Ascending aorta (tissue), 2 donors: ENCODE measurements at regions of chr17 and their contacts with region 1.

Region 1: DNA sequence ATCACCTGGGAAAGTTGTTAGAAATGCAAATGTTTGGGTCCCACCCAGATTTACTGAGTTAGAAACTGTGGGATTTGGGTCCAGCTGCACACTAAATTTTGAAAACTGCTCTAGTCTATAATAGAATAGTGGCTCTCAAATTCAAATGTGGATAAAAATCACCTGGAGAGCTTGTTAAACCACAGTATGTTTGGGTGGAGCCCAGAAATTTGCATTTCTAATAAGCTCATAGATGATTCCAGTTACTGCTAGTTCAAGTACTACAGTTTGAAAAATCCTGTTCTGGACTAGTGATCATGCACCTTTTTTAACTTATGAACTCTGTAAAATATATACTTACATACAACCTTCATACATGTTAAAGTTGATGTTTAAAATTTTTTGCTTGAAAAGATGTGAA is 27.8 kb downstream of the RABEP1 start:
- DNase-seq: no peak
- H3K4me3 ChIP-seq: no peak overlapping the region
- H3K27ac ChIP-seq: no peak overlapping the region
- H3K4me1 ChIP-seq: peaks cover 0 to 2% of the 10 kb centered on the region in 2 donors
- H3K27me3 ChIP-seq: no peaks in the 10 kb centered on the region
- CTCF ChIP-seq: no peak

Region 2: DNA sequence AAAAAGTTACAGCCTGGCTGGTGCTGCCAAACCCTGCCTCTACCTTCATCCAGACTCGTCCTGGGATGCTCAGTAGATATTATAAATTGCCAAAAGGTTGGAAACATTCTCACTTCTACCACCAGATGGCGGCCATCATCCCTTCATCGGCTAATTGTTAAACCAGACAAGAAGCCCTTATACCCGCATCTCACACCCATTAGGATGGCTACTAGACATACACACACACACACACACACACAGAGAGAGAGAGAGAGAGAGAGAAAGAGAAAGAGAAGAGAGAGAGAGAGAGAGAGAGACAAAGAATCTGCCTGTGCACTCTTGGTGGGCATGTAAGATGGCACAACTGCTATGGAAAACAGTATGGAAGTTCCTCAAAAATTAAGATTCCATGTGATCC is 60.2 kb before region 1 on chr17:
- intact Hi-C with region 1: loop called (anchors 10 kb)
- DNase-seq: peak in 1 of 2 donors; percentile 78
- H3K4me3 ChIP-seq: no peak overlapping the region
- H3K27ac ChIP-seq: no peak overlapping the region
- H3K4me1 ChIP-seq: no peaks in the 10 kb centered on the region
- H3K27me3 ChIP-seq: no peaks in the 10 kb centered on the region
- CTCF ChIP-seq: peak; percentile 52 to 65 (median 56)